ENCODE measurements at regions of chr12 and their contacts with region 1.

Region 1: GRCh38 chr12:108950991-108951739 is 69.7 kb downstream of the SVOP start:
- DNase-seq: no peak
- H3K4me3 ChIP-seq: no peak overlapping the region
- CTCF ChIP-seq: peak; percentile 72

Region 2: GRCh38 chr12:108884116-108885012 is 66.8 kb before region 1 on chr12:
- CTCF ChIA-PET with region 1: interaction called, 16 read pairs
- POLR2A ChIA-PET with region 1: no interaction called
- DNase-seq: no peak
- H3K4me3 ChIP-seq: no peak overlapping the region
- CTCF ChIP-seq: peak; percentile 39

Region 3: DNA sequence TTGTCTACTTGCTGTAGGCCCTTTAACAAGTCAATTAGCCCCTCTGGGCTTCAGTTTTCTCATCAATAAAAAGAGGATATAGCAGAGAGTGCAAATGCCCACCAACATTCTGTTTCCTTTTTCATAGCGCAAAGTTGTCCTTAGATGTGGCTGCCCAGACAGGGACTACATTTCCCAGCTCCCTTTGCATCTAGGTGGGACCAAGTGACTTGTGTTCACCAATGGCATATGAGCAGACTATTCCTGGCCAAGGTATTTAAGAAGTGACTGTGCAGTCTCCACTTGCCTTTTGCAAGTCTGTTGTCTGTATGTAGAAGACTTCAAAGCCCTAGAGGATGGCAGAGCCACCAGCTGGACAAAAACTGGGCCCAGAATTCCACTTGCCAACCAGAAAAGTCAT is 11.6 kb before region 1 on chr12:
- CTCF ChIA-PET with region 1: interaction called, 17 read pairs
- POLR2A ChIA-PET with region 1: no interaction called
- DNase-seq: no peak
- H3K4me3 ChIP-seq: no peak overlapping the region
- CTCF ChIP-seq: no peak

Region 4: DNA sequence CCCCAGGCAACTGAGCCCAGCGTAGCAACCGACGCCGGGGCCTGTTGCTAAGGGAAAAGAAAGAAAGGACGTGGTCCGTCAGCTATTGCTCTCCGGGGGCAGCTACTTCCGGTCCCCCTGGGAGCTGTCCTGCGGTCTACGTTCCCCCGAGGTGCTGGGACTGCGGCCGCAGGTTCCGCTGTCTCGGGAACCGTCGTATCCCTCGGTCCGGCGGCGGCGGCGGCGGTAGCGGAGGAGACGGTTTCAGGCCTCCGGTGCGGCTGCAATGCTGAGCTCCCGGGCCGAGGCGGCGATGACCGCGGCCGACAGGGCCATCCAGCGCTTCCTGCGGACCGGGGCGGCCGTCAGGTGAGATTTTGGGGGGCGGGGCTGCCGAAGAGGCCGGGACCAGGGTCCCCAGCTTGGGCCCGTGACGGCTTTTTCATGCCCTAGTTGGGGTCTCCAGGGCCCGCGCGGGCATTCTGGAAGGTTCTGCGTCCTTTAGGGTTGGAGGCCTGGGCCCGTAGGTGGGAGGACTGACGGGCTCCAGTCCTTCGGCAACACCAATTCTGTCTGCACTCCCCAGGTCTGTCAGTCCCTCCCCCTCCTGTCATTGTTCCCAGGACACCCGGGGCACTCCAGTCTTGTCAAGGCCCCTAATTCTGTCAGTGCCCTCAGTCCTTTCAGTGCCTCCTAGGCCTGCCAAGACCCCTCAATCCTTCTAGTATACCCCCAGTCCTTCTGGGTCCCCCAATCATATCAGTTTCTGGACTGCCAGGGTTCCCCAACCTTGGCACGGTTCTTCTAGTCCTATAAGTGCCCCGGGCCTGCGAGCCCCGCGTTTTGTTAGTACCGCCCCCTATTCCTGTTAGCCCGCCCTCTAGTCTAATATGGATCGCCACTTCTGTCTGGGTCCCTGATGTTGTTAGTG is 101.5 kb after region 1 on chr12 and contains the start of gene USP30:
- CTCF ChIA-PET with region 1: no interaction called
- POLR2A ChIA-PET with region 1: no interaction called
- DNase-seq: peak; percentile 41
- H3K4me3 ChIP-seq: peak within 1 kb of the TSS; percentile 94
- CTCF ChIP-seq: no peak

Measured in AG04449 (cell line).